H1 (cell line): ENCODE measurements at regions of chr3 and their contacts with region 1.

Region 1: DNA sequence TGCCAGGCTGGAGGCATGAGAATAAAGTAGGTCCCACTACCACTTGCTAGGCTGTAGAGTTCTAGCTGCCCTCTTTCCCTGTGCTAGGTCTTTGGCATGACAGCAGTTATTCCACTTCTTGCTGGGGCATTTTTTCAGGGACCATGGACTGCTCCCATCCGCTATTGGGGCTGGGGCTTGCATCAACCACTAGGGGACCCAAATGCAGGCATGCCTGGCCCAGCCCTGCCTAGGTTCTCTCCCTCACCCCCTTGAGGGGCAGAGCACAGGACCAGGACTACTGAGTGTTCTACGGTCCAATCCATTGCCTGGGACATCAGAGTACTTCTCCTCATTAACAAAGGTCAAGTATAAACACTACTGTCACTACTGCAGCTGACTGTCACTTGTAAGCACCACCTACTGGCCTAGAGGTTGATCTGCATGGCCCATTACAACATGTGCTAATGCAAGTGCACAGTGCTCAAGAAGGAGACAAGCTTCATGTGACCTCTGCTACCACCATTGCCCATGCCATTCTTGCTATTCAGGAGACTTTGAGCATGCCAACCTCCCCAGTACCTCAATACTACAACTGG is 270.6 kb downstream of the MBNL1 start:
- DNase-seq: no peak
- H3K4me3 ChIP-seq: no peak overlapping the region
- H3K27ac ChIP-seq: no peak overlapping the region
- H3K4me1 ChIP-seq: no peaks in the 10 kb centered on the region
- H3K27me3 ChIP-seq: no peaks in the 10 kb centered on the region
- CTCF ChIP-seq: peak in 2 of 3 experiments; percentile 24 to 58; a peak in 2 of 4 replicates
- EP300 ChIP-seq: no peak
- POLR2A ChIP-seq: no peak
- RAD21 ChIP-seq: peak; percentile 6 to 7; a peak in 1 of 4 replicates

Region 2: DNA sequence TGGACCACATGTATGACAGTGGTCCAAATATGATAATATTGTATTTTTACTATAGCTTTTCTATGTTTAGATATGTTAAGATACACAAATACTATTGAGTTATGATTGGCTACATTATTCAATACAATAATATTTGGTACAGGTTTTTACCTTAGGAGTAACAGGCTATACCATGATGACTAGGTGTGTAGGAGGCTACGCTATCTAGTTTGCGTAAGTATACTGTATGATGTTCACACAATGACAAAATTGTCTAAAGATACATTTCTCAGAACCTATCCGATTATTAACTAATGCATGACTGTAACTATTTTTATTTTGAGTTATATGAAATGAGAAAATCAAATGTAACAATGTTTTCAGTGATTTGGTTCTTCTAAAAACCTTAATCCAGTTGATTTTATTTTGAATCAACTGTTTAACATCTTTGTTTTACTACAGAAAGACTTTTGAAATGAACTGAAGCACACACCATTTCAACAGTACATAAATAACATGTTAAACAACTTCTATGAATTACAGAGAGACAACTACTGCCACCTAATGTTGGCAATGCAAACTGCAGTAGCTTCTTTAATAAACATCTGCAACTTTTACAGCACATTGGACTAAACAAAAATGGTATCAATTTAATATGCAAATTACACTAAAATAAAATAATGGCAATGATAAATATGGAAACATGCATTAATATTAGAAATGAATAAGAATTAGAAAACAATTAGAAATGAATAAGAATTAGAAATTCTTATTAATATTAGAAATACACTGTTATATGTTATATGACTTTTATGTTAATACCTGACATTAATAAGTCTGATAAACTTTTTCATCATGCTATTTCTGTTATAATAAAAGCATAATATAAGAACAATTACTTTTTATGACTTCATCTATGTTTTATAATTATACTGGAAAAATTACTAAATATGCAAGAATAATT is 14.8 kb before region 1 on chr3:
- CTCF ChIA-PET with region 1: interaction called, 32 read pairs
- POLR2A ChIA-PET with region 1: interaction called, 4 read pairs
- DNase-seq: no peak
- H3K4me3 ChIP-seq: no peak overlapping the region
- H3K27ac ChIP-seq: no peak overlapping the region
- H3K4me1 ChIP-seq: no peaks in the 10 kb centered on the region
- H3K27me3 ChIP-seq: no peaks in the 10 kb centered on the region
- CTCF ChIP-seq: peak in 2 of 3 experiments; percentile 32 to 75; a peak in 2 of 4 replicates
- EP300 ChIP-seq: no peak
- POLR2A ChIP-seq: no peak
- RAD21 ChIP-seq: peak; percentile 64 to 65

Region 3: GRCh38 chr3:152554980-152555379 is 15.7 kb after region 1 on chr3:
- CTCF ChIA-PET with region 1: interaction called, 10 read pairs
- POLR2A ChIA-PET with region 1: no interaction called
- DNase-seq: no peak
- H3K4me3 ChIP-seq: no peak overlapping the region
- H3K27ac ChIP-seq: no peak overlapping the region
- H3K4me1 ChIP-seq: no peaks in the 10 kb centered on the region
- H3K27me3 ChIP-seq: no peaks in the 10 kb centered on the region
- CTCF ChIP-seq: no peak
- EP300 ChIP-seq: no peak
- POLR2A ChIP-seq: no peak
- RAD21 ChIP-seq: no peak